ENCODE measurements at regions of chr12 and their contacts with region 1.

Region 1: GRCh38 chr12:2884810-2885209 is 5.9 kb upstream of the TULP3 start:
- DNase-seq: no peak
- H3K4me3 Mint-ChIP-seq: no peak overlapping the region
- H3K27ac Mint-ChIP-seq: no peak overlapping the region
- H3K4me1 Mint-ChIP-seq: peaks cover 11% of the 10 kb centered on the region
- H3K27me3 Mint-ChIP-seq: no peaks in the 10 kb centered on the region
- CTCF ChIP-seq: no peak

Region 2: DNA sequence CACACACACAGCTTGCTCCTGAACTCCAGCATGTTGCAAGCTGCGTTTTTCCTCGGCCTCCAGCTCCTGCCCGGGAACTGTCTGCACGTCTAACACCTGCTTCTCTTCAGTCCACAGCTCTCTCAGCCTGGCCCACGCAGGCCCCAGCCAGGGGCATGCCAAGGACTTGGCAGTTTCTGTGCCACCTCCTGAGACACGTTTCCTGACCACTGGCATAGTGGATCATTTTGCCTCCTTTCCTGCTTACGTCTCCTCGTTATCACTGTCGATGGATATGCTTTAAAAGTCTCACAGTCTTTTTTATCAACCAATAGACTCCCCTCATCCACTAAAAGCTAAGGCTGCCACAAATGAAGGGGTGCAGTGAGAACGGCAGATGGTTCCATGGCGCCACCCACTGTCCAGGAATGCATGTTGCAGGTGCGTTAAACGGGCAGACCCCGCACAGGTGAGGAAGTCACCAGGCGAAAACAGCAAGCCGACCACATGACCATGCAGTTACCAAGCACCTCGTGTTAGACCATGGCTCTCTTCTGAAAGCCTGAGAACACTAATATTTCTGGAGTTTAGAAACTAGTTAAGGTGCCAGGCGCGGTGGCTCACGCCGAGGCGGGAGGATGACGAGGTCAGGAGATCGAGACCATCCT is 59.7 kb after region 1 on chr12:
- CTCF ChIA-PET with region 1: interaction called, 5 read pairs
- POLR2A ChIA-PET with region 1: interaction called, 4 read pairs
- intact Hi-C with region 1: loop called (anchors 1 kb)
- DNase-seq: peak; percentile 68
- H3K4me3 Mint-ChIP-seq: peak overlapping the region; percentile 70
- H3K27ac Mint-ChIP-seq: no peak overlapping the region
- H3K4me1 Mint-ChIP-seq: no peaks in the 10 kb centered on the region
- H3K27me3 Mint-ChIP-seq: no peaks in the 10 kb centered on the region
- CTCF ChIP-seq: peak; percentile 84

Region 3: DNA sequence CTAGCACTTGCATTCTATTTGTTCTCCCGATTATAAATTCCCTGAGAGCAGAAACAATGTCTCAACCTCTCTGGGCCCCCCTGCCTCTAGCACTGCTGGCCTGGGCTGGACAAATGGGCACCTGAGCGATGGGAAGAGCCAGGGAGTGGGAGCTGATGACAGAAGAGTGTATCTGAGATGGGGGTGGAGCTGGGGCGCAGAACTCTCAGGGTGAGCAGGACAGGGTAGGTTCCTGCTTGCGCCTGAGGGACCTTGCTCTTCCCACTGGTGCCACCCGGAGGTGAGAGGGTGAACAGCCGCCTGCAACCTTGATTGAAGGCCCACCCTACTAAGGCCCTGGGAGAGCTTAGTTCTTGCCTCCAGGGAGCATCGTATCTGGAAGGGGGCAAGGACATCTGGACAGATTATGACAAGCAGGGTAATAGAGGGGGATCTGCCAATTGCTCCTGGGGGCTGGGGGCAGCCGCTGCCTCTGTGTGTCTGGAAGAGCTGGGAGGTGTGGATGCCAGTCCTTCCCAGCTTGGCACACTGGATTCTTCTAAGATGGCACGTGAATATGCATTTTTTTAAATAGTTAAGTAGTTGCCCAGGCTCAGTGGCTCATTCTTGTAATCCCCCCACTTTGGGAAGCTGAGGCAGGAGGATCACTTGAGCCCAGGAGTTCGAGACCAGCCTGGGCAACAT is 149.4 kb after region 1 on chr12:
- CTCF ChIA-PET with region 1: interaction called, 5 read pairs
- POLR2A ChIA-PET with region 1: interaction called, 3 read pairs
- intact Hi-C with region 1: loop called (anchors 2 kb)
- DNase-seq: peak; percentile 59
- H3K4me3 Mint-ChIP-seq: no peak overlapping the region
- H3K27ac Mint-ChIP-seq: no peak overlapping the region
- H3K4me1 Mint-ChIP-seq: no peaks in the 10 kb centered on the region
- H3K27me3 Mint-ChIP-seq: no peaks in the 10 kb centered on the region
- CTCF ChIP-seq: peak; percentile 37

Measured in MCF 10A (cell line).